Activated B cell treated with CpG ODN at 0.5 μM for 24 hours (primary cell): ENCODE measurements at regions of chr17 and their contacts with region 1.

Region 1: GRCh38 chr17:44344939-44345453 is at the start of gene GRN:
- DNase-seq: peak; percentile 76
- ATAC-seq: peak; percentile 70
- H3K4me3 Mint-ChIP-seq: peak within 1 kb of the TSS; percentile 97
- H3K27ac Mint-ChIP-seq: peak within 1 kb of the TSS; percentile 89
- H3K4me1 Mint-ChIP-seq: peaks cover 58% of the 10 kb centered on the region
- H3K27me3 Mint-ChIP-seq: no peaks in the 10 kb centered on the region
- CTCF ChIP-seq: no peak
- total RNA-seq, gene GRN: 229 and 250 TPM in 2 replicates

Region 2: DNA sequence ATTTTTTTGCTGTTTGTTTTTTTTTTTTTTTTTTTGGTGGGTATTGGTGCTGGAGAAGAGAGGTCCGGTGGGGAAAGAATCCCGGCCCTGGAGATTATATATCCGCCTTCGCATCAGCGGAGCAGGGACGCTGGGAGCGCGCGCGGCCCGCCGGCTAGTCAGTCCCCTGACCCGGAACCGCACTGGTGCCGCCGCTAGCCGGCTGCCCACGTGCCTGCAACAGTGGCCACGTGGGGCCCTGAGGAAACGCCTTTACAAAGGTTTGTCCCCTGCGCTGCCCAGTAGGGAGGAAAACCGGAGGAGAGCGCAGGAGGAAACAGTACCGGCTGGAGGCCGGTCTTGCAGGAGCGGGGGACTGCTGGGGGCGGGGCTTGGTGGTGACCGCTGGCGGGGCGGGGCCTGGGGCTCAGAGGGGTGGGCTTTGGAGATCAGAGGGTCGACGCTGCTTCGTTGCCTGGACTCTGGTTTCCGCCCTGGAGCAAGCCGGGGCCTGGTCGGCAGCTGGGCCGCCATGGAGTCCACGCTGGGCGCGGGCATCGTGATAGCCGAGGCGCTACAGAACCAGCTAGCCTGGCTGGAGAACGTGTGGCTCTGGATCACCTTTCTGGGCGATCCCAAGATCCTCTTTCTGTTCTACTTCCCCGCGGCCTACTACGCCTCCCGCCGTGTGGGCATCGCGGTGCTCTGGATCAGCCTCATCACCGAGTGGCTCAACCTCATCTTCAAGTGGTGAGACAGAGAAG is 274.4 kb before region 1 on chr17 and contains the start of gene G6PC3:
- CTCF ChIA-PET with region 1: no interaction called
- POLR2A ChIA-PET with region 1: interaction called, 4 read pairs
- intact Hi-C with region 1: loop called (anchors 5 kb)
- DNase-seq: peak; percentile 73
- ATAC-seq: peak; percentile 73
- H3K4me3 Mint-ChIP-seq: peak within 1 kb of the TSS; percentile 97
- H3K27ac Mint-ChIP-seq: peak within 1 kb of the TSS; percentile 95
- H3K4me1 Mint-ChIP-seq: peaks cover 44% of the 10 kb centered on the region
- H3K27me3 Mint-ChIP-seq: no peaks in the 10 kb centered on the region
- CTCF ChIP-seq: no peak
- total RNA-seq, gene G6PC3: 30.9 and 35.2 TPM in 2 replicates

Region 3: DNA sequence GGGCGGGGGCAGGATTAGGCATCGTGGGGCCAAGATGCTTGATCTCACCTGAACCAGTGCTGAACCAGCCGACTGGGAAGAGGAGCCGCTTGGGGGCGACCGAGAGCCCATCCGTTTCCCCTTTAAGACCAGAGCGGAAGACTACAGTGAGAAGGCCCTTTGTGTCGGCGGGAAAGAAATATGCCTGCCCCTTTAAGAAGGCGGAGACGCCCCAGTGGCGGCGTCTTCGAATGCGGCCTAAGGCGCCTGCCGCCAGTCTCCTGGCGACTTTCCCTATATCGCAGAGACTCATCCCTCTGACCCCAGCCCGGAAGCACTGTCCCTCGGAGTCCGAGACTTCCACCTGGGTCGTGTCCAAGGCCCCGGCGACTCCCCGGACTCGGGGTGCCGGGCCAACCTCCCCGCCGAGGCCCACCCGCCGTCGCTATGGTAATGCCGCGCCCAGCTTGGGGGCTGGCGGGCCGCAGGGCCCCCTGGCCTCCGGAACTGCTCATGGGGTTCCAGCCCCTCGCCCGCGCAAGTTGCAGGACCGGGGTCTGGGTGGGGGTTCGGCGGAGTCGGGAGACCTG is 203.2 kb before region 1 on chr17 and contains the start of gene HROB:
- CTCF ChIA-PET with region 1: no interaction called
- POLR2A ChIA-PET with region 1: interaction called, 4 read pairs
- intact Hi-C with region 1: loop called (anchors 1 kb)
- DNase-seq: peak; percentile 96
- ATAC-seq: peak; percentile 98
- H3K4me3 Mint-ChIP-seq: peak within 1 kb of the TSS; percentile 84
- H3K27ac Mint-ChIP-seq: peak within 1 kb of the TSS; percentile 70
- H3K4me1 Mint-ChIP-seq: peaks cover 15% of the 10 kb centered on the region
- H3K27me3 Mint-ChIP-seq: peaks cover 8% of the 10 kb centered on the region
- CTCF ChIP-seq: no peak
- total RNA-seq, gene HROB: 2.2 and 5.0 TPM in 2 replicates

Region 4: GRCh38 chr17:44210342-44211192 is 134.4 kb before region 1 on chr17:
- CTCF ChIA-PET with region 1: interaction called, 108 read pairs
- POLR2A ChIA-PET with region 1: interaction called, 241 read pairs
- intact Hi-C with region 1: loop called (anchors 1 kb)
- DNase-seq: peak; percentile 93
- ATAC-seq: peak; percentile 98
- H3K4me3 Mint-ChIP-seq: peak overlapping the region; percentile 52
- H3K27ac Mint-ChIP-seq: peak overlapping the region; percentile 74
- H3K4me1 Mint-ChIP-seq: peaks cover 55% of the 10 kb centered on the region
- H3K27me3 Mint-ChIP-seq: no peaks in the 10 kb centered on the region
- CTCF ChIP-seq: peak; percentile 73

Region 5: GRCh38 chr17:44241106-44241624 is 103.8 kb before region 1 on chr17:
- CTCF ChIA-PET with region 1: no interaction called
- POLR2A ChIA-PET with region 1: no interaction called
- intact Hi-C with region 1: no loop called
- DNase-seq: no peak
- ATAC-seq: no peak
- H3K4me3 Mint-ChIP-seq: no peak overlapping the region
- H3K27ac Mint-ChIP-seq: no peak overlapping the region
- H3K4me1 Mint-ChIP-seq: peaks cover 21% of the 10 kb centered on the region
- H3K27me3 Mint-ChIP-seq: no peaks in the 10 kb centered on the region
- CTCF ChIP-seq: no peak

Region 6: DNA sequence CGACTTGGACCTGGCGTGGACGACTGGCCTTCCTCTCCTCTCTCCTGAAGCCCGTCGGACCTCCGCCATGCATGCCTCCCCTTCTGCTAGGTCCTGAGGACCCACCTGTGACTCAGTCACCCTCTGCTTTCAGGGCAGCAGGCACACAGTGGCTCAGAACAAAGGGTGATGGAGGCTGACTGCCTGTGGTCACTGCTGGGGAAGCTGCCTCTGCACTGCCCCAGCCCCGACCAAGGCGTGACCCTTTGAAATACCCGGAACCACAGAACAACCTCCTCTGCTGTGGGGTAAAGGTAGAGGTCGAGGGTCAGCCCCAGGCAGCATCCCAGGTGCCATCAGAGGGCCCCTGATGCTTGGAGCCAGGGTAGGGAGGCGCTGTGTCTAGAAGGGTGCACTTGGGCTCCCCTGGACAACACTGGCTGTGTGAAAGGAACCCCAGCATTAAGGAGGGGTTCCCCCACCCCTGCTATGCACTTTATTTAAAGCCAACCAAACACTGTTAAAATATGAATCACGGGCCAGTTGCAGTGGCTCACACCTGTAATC is 64.5 kb before region 1 on chr17:
- CTCF ChIA-PET with region 1: no interaction called
- POLR2A ChIA-PET with region 1: no interaction called
- intact Hi-C with region 1: no loop called
- DNase-seq: no peak
- ATAC-seq: no peak
- H3K4me3 Mint-ChIP-seq: no peak overlapping the region
- H3K27ac Mint-ChIP-seq: no peak overlapping the region
- H3K4me1 Mint-ChIP-seq: peaks cover 10% of the 10 kb centered on the region
- H3K27me3 Mint-ChIP-seq: peaks cover 6% of the 10 kb centered on the region
- CTCF ChIP-seq: no peak

Region 7: GRCh38 chr17:44385287-44386181 is 40.5 kb after region 1 on chr17:
- CTCF ChIA-PET with region 1: no interaction called
- POLR2A ChIA-PET with region 1: no interaction called
- intact Hi-C with region 1: no loop called
- DNase-seq: peak; percentile 67
- ATAC-seq: peak; percentile 97
- H3K4me3 Mint-ChIP-seq: peak overlapping the region; percentile 77
- H3K27ac Mint-ChIP-seq: no peak overlapping the region
- H3K4me1 Mint-ChIP-seq: peaks cover 23% of the 10 kb centered on the region
- H3K27me3 Mint-ChIP-seq: peaks cover 31% of the 10 kb centered on the region
- CTCF ChIP-seq: no peak

Region 8: DNA sequence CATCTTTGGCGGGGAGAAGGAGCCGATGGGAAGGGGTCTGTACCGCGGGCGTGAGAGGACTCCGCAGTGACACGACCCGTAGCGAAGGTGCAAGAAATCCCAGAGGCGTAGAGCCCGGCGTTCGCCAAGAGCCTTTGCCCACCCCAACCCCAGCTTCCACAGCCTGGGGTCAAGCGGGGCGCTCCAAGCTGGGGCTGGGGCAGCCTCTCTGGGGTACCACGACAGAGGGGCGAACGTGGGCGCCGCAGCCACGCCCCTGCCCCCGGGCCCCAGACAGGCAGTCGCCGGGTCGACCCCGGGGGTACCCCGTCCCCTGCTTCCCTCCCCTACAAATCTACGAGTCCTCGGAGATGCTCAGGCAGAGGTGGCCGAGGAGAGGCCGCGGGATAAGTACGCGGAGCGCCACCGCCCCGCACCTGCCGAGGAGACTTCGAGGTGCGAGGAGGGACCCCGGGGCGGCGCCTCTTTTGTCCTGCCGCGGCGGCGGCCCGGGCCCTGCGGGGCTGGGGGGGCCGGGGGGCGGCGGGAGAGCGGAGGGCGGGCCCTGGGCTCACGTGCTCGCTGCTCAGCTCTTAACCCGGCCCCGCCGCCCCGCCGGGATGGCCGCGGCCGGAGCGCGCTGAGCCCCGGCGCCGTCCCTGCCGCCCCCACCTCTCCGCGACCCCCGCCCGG is 413.6 kb after region 1 on chr17 and contains the start of gene ADAM11:
- CTCF ChIA-PET with region 1: no interaction called
- POLR2A ChIA-PET with region 1: no interaction called
- intact Hi-C with region 1: no loop called
- DNase-seq: no peak
- ATAC-seq: peak; percentile 14
- H3K4me3 Mint-ChIP-seq: peak within 1 kb of the TSS; percentile 55
- H3K27ac Mint-ChIP-seq: no peak within 1 kb of the TSS
- H3K4me1 Mint-ChIP-seq: peaks cover 3% of the 10 kb centered on the region
- H3K27me3 Mint-ChIP-seq: peaks cover 26% of the 10 kb centered on the region
- CTCF ChIP-seq: no peak
- total RNA-seq, gene ADAM11: 0.09 and 0.10 TPM in 2 replicates

Region 9: DNA sequence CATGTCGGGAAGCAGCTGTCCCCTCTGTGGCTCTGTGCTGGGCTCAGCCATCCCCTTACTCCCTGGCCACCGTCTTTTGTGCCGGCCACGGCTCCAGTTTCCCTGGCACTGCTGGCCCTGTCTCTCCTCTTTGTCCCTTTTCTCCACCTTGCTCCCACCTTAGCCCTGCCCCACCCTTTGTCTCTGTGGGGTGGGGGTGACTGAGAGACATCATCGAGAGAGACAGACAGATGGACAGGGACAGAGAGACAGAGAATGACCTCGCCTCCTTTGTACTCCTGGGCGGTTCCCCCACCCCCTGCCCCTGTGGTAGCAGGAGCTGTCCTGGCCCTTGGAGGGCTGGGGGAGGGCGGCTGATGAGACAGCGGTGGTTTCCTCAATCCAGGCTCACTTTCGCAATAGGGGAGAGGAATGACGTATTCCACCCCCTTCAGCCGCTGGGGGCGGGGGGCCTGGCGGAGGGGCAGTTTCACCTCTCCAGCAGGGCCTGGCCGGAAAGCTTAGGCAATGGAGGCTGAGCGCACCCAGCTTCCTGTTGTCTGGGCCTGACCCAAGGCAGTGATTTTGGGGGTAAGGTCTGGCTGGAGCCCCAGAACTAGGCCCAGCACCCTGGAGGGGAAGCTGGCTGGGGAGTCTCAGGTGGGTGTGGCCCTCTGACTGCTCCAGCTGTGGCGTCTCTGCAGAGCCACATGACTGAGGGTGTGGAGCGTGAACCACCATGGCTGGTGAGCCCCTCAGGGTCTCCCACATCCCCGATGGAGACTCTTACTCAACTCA is 884.0 kb after region 1 on chr17:
- CTCF ChIA-PET with region 1: no interaction called
- POLR2A ChIA-PET with region 1: no interaction called
- intact Hi-C with region 1: loop called (anchors 5 kb)
- DNase-seq: peak; percentile 84
- ATAC-seq: peak; percentile 45
- H3K4me3 Mint-ChIP-seq: peak overlapping the region; percentile 79
- H3K27ac Mint-ChIP-seq: peak overlapping the region; percentile 99
- H3K4me1 Mint-ChIP-seq: peaks cover 97% of the 10 kb centered on the region
- H3K27me3 Mint-ChIP-seq: no peaks in the 10 kb centered on the region
- CTCF ChIP-seq: no peak